SK-N-SH (cell line): ENCODE measurements at regions of chr7 and their contacts with region 1.

Region 1: DNA sequence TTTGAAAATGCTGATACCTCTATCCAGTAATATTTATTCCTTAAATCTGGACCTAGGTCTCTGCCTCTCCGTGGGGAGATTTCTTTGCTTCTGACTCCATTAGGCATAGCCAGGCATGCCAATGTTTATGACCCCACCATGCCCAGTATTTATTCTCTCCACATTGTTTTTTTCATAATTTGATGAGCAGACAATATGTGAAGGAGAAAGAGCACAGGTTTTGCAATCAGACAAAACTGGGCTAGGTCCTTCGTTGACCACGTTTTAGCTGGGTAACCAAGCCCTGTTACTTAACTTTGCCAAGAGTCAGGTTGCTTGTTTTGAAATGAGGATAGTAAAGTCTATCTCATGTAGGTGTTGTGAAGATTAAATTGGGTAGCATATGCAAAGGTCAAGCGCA is 21.6 kb upstream of the PRPS1L1 start:
- DNase-seq: no peak
- H3K4me3 ChIP-seq: no peak overlapping the region
- H3K27ac ChIP-seq: no peak overlapping the region
- H3K4me1 ChIP-seq: no peaks in the 10 kb centered on the region
- H3K27me3 ChIP-seq: peaks cover 34% of the 10 kb centered on the region
- CTCF ChIP-seq: no peak
- EP300 ChIP-seq: no peak
- RAD21 ChIP-seq: no peak

Region 2: GRCh38 chr7:18019573-18019972 is 29.7 kb before region 1 on chr7:
- CTCF ChIA-PET with region 1: no interaction called
- POLR2A ChIA-PET with region 1: no interaction called
- DNase-seq: no peak
- H3K4me3 ChIP-seq: no peak overlapping the region
- H3K27ac ChIP-seq: peak overlapping the region; percentile 43 to 63; a peak in 3 of 4 replicates
- H3K4me1 ChIP-seq: peaks cover 0 to 17% of the 10 kb centered on the region in 2 experiments; a peak in 2 of 4 replicates
- H3K27me3 ChIP-seq: no peaks in the 10 kb centered on the region; the same call in 1 of the 2 replicates
- CTCF ChIP-seq: no peak
- EP300 ChIP-seq: no peak
- RAD21 ChIP-seq: no peak

Region 3: GRCh38 chr7:18064242-18064838 is 15.1 kb after region 1 on chr7:
- CTCF ChIA-PET with region 1: interaction called, 11 read pairs
- POLR2A ChIA-PET with region 1: no interaction called
- DNase-seq: peak; percentile 26
- H3K4me3 ChIP-seq: no peak overlapping the region
- H3K27ac ChIP-seq: no peak overlapping the region
- H3K4me1 ChIP-seq: no peaks in the 10 kb centered on the region
- H3K27me3 ChIP-seq: peaks cover 22% of the 10 kb centered on the region; the same call in 1 of the 2 replicates
- CTCF ChIP-seq: peak; percentile 52
- EP300 ChIP-seq: no peak
- RAD21 ChIP-seq: peak; percentile 75